Keratinocyte (primary cell): ENCODE measurements at regions of chr12 and their contacts with region 1.

Region 1: DNA sequence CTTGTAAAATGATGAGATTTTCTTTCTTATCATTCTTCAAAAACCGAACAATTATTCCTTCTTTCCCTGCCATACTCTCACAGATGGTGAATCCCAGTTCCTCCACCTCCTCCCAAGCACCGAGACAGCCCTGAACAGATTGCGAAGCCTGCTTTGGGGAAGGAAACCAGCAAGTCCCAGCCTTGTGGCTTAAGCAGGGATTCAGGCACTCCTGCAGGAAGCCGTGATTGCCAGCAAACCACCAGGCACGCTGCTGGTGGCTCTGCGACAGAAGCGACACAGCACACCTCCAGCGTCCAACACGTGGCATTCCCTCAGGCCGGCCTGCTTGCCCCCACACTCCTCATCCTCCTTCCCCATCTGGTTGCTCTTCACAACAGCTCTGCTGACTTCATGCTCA is 237.7 kb downstream of the GXYLT1 start:
- DNase-seq: no peak
- H3K4me3 ChIP-seq: no peak overlapping the region
- H3K27ac ChIP-seq: no peak overlapping the region
- H3K4me1 ChIP-seq: no peaks in the 10 kb centered on the region
- H3K27me3 ChIP-seq: no peaks in the 10 kb centered on the region
- CTCF ChIP-seq: no peak

Region 2: GRCh38 chr12:41684997-41685396 is 222.0 kb before region 1 on chr12:
- dilution Hi-C with region 1: loop called (anchors 10 kb)
- DNase-seq: no peak
- H3K4me3 ChIP-seq: no peak overlapping the region
- H3K27ac ChIP-seq: no peak overlapping the region
- H3K4me1 ChIP-seq: no peaks in the 10 kb centered on the region
- H3K27me3 ChIP-seq: no peaks in the 10 kb centered on the region
- CTCF ChIP-seq: peak in 1 of 3 experiments; percentile 49